ENCODE measurements at regions of chr15 and their contacts with region 1.

Region 1: GRCh38 chr15:42457445-42458442 is 33.2 kb downstream of the ZNF106 start:
- DNase-seq: peak; percentile 80 to 84
- ATAC-seq: peak; percentile 91 to 92
- H3K4me3 ChIP-seq: peak overlapping the region; percentile 20 to 53 (median 45)
- H3K27ac ChIP-seq: peak overlapping the region; percentile 82 to 92 (median 88)
- H3K4me1 ChIP-seq: peaks cover 50 to 51% of the 10 kb centered on the region in 2 donors
- H3K27me3 ChIP-seq: no peaks in the 10 kb centered on the region
- CTCF ChIP-seq: no peak
- POLR2A ChIP-seq: peak; percentile 60 to 89

Region 2: GRCh38 chr15:42581272-42581730 is 123.6 kb after region 1 on chr15:
- in situ Hi-C with region 1: no loop called
- intact Hi-C with region 1: loop called (anchors 1 kb)
- DNase-seq: peak; percentile 68 to 72
- ATAC-seq: peak; percentile 81 to 89
- H3K4me3 ChIP-seq: peak overlapping the region; percentile 46 to 57 (median 51)
- H3K27ac ChIP-seq: peak overlapping the region; percentile 50 to 68 (median 61)
- H3K4me1 ChIP-seq: peaks cover 6 to 30% of the 10 kb centered on the region in 2 donors
- H3K27me3 ChIP-seq: peaks cover 0 to 4% (median 0%) of the 10 kb centered on the region in 3 donors
- CTCF ChIP-seq: no peak
- POLR2A ChIP-seq: peak; percentile 9 to 35

Measured in gastrocnemius medialis (tissue), 4 donors.